Naive thymus-derived CD8-positive, alpha-beta T cell (primary cell): ENCODE measurements at regions of chr19 and their contacts with region 1.

Region 1: GRCh38 chr19:16216744-16217670 is 19.3 kb downstream of the AP1M1 start:
- DNase-seq: peak in 9 of 10 donors; percentile 26 to 76 (median 57)
- ATAC-seq: peak; percentile 72 to 81
- H3K4me3 Mint-ChIP-seq: peak overlapping the region; percentile 63 to 85 (median 82)
- H3K27ac Mint-ChIP-seq: peak overlapping the region; percentile 93 to 98 (median 96)
- H3K4me1 Mint-ChIP-seq: peaks cover 41 to 72% (median 68%) of the 10 kb centered on the region in 4 donors
- H3K27me3 Mint-ChIP-seq: no peaks in the 10 kb centered on the region

Region 2: GRCh38 chr19:16164222-16164890 is 52.7 kb before region 1 on chr19:
- POLR2A ChIA-PET with region 1: no interaction called
- DNase-seq: no peak
- ATAC-seq: no peak
- H3K4me3 Mint-ChIP-seq: no peak overlapping the region
- H3K27ac Mint-ChIP-seq: no peak overlapping the region
- H3K4me1 Mint-ChIP-seq: peaks cover 0 to 20% (median 3%) of the 10 kb centered on the region in 4 donors
- H3K27me3 Mint-ChIP-seq: no peaks in the 10 kb centered on the region

Region 3: GRCh38 chr19:16185123-16185767 is 31.8 kb before region 1 on chr19 and contains the start of gene FAM32A:
- POLR2A ChIA-PET with region 1: interaction called, 17 read pairs
- DNase-seq: peak; percentile 88 to 100 (median 99)
- ATAC-seq: peak; percentile 90 to 91
- H3K4me3 Mint-ChIP-seq: peak within 1 kb of the TSS; percentile 95 to 100 (median 98)
- H3K27ac Mint-ChIP-seq: peak within 1 kb of the TSS; percentile 95 to 99 (median 98)
- H3K4me1 Mint-ChIP-seq: peaks cover 17 to 48% (median 36%) of the 10 kb centered on the region in 4 donors
- H3K27me3 Mint-ChIP-seq: peaks cover 0 to 1% (median 0%) of the 10 kb centered on the region in 5 donors
- polyA plus RNA-seq, gene FAM32A: 150 to 205 (median 183) TPM

Region 4: DNA sequence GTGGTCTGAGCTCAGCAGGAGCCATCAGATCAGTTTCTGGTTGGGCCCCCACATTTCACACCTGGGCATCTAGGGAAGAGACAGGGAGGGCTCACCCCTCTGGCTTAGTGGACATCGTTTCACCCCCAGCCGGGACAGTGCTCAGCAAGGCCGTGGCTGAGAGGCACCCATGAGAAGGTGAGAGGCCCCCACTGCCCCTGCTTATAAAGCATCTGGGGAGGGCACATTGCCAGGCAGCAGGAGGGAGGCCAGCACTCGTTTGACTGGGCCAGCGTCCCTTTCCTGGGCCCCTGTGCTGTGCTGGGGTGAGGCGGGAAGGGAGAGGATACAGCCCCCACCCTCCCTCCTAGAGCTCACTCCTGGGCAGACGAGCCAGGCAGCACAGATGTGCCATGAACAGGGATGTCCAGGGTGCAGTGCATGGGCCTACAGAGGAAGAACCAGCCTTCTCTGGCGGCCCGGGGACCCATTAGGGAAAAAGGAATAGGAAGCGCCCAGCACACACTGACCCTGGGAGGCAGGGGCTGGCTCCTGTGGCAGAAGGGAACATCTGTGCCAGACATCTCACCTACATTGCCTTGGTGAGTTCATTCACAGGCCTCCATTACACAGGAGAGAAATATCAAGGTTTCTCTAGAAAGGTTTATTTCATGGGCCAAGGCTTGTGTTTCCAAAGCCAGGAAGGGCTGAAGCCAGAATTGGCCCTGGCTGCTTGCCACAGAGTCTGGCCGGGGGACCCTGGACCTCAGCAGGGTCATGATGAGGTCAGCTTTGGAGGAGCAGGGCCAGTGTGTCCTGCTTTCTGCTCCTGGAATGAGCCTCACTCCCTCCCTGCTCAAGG is 11.6 kb before region 1 on chr19:
- POLR2A ChIA-PET with region 1: interaction called, 25 read pairs
- DNase-seq: no peak
- ATAC-seq: no peak
- H3K4me3 Mint-ChIP-seq: no peak overlapping the region
- H3K27ac Mint-ChIP-seq: peak overlapping the region in 7 of 10 donors; percentile 33 to 95 (median 47)
- H3K4me1 Mint-ChIP-seq: peaks cover 43 to 83% (median 76%) of the 10 kb centered on the region in 4 donors
- H3K27me3 Mint-ChIP-seq: no peaks in the 10 kb centered on the region

Region 5: GRCh38 chr19:16233836-16234551 is 17.0 kb after region 1 on chr19:
- POLR2A ChIA-PET with region 1: interaction called, 51 read pairs
- DNase-seq: peak in 3 of 10 donors; percentile 7 to 29 (median 15)
- ATAC-seq: peak in 1 of 2 donors; percentile 16
- H3K4me3 Mint-ChIP-seq: peak overlapping the region in 5 of 10 donors; percentile 14 to 66 (median 47)
- H3K27ac Mint-ChIP-seq: peak overlapping the region; percentile 90 to 99 (median 93)
- H3K4me1 Mint-ChIP-seq: peaks cover 32 to 73% (median 56%) of the 10 kb centered on the region in 4 donors
- H3K27me3 Mint-ChIP-seq: no peaks in the 10 kb centered on the region

Region 6: DNA sequence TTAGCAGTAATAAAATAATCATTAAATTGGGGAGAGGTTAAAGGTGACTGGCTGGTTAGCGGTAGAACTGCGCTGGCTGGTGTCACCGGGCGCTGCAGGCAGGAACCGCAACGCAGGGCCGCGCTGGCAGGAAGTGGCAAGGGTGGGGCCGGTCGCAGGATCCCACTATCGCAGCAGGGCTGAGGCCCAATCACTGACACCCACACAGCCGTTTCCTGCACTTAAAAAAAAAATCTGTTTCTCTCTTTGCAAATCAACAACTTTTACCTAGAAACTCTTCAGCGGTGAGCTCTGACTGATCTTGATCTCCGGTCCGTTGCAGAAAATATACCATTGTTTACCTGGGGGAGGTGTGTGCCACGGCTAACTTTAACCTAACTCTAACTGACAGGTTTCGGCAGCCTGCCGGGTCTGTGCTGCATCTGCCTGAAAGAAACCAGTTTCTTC is 154.6 kb after region 1 on chr19:
- POLR2A ChIA-PET with region 1: interaction called, 23 read pairs
- DNase-seq: peak; percentile 77 to 97 (median 94)
- ATAC-seq: peak; percentile 41 to 59
- H3K4me3 Mint-ChIP-seq: no peak overlapping the region
- H3K27ac Mint-ChIP-seq: no peak overlapping the region
- H3K4me1 Mint-ChIP-seq: peaks cover 0 to 54% (median 20%) of the 10 kb centered on the region in 4 donors
- H3K27me3 Mint-ChIP-seq: peaks cover 0 to 2% (median 0%) of the 10 kb centered on the region in 5 donors

Region 7: GRCh38 chr19:16572332-16573211 is 355.6 kb after region 1 on chr19 and contains the start of gene SLC35E1:
- POLR2A ChIA-PET with region 1: no interaction called
- DNase-seq: peak; percentile 83 to 95 (median 88)
- ATAC-seq: peak; percentile 89 to 92
- H3K4me3 Mint-ChIP-seq: peak within 1 kb of the TSS; percentile 93 to 99 (median 98)
- H3K27ac Mint-ChIP-seq: peak within 1 kb of the TSS; percentile 97 to 99 (median 99)
- H3K4me1 Mint-ChIP-seq: peaks cover 12 to 69% (median 52%) of the 10 kb centered on the region in 4 donors
- H3K27me3 Mint-ChIP-seq: no peaks in the 10 kb centered on the region
- polyA plus RNA-seq, gene SLC35E1: 13.6 to 22.3 (median 16.1) TPM